Right cardiac atrium (tissue), 5 donors: ENCODE measurements at regions of chr16 and their contacts with region 1.

Region 1: DNA sequence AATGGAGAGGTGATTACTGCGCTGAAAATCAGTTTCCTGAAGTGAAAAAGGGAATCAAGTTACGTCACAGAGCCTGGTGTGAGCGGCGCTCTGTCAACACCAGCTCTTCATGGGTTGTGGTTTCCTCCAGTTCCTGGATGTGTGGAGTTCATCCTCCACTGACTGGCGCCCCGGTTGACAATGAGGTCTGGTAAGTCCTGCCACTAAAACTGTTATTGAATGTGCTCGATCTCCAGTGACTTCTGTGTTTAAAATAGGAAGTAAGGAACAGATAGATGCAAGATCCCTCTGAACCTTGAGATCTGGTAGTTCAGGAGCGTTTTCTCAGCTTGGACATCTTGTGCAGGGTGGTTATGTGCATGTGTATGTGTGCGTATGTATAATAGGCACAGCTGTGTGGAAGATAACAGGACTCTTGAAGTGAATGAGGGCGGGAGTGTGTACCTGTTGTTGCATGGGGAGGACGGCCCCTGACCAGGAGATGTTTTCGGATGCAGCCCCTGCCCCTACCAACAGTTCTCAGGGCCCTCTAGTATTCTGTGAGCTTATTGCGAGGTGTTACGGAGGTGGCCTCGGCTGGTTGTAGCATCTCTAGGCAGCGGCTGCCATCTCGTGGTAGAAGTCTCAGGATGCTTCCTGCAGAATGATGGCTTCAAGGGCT is 22.0 kb upstream of the GOT2 start:
- DNase-seq: peak; percentile 60 to 87 (median 75)
- ATAC-seq: peak; percentile 91 to 94
- H3K4me3 ChIP-seq: no peak overlapping the region
- H3K27ac ChIP-seq: no peak overlapping the region
- H3K4me1 ChIP-seq: no peaks in the 10 kb centered on the region
- H3K27me3 ChIP-seq: no peaks in the 10 kb centered on the region

Region 2: DNA sequence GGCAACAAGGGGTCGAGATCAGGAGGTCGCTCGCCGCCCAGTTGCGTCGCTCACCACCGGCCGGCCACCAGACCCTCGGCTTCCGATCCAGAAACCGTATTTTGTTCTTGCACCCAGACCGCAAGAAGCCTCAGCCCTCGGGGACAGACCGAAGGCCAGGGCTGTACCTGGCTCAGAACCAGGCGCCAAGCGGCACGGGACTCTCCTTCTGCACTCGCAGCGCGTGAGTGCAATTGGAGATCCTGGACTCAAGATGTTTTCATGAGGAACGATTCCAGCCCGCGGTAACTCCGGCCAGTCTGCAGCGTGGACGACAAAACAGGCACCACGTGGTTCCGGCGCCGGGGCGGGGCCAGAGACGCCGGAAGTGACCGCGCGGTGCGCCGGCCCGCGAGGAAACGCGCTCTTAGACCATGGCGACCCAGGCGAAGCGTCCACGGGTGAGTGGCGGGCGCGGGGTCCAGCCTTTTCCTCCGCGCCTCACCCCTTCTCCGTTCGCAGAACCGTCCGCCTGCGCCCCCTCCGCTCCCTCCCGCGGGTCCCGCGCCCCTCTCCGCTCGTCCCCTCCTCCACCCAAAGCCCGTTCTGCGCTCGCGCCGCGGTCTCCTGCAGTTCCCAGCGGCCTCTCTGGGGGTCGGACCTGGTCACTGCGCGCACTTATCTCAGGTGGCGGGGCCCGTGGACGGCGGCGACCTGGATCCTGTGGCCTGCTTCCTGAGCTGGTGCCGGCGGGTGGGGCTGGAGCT is 240.8 kb before region 1 on chr16 and contains the start of gene SETD6:
- intact Hi-C with region 1: loop called in 2 of 4 experiments (anchors 5 to 10 kb)
- DNase-seq: peak; percentile 90 to 95 (median 94)
- ATAC-seq: peak; percentile 94 to 95
- H3K4me3 ChIP-seq: peak within 1 kb of the TSS; percentile 56
- H3K27ac ChIP-seq: peak within 1 kb of the TSS; percentile 31
- H3K4me1 ChIP-seq: peaks cover 5% of the 10 kb centered on the region
- H3K27me3 ChIP-seq: no peaks in the 10 kb centered on the region
- total RNA-seq, gene SETD6: 9.7 to 12.4 (median 11.1) TPM

Region 3: DNA sequence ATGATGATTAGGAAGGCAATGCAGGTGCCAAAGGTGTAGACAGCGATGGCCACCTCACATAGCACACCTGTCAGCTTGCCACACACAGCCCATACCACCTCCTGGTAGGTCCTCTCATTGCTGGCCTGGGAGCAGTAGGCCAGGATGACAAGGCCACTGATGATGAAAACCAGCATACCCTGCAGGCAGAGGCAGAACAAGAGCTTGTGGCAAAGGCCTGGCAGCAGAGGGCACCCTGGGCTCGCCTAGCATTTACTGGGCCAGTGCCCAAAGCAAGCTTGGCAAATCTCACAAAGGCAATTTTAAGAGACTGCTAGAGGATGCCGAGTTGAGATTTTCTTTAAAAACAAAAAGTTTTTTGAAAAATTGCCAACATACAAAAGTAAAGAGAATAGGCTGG is 77.4 kb before region 1 on chr16:
- intact Hi-C with region 1: loop called in 3 of 4 experiments (anchors 2 to 10 kb)
- DNase-seq: no peak
- ATAC-seq: peak; percentile 10 to 40
- H3K4me3 ChIP-seq: no peak overlapping the region
- H3K27ac ChIP-seq: no peak overlapping the region
- H3K4me1 ChIP-seq: peaks cover 4% of the 10 kb centered on the region
- H3K27me3 ChIP-seq: no peaks in the 10 kb centered on the region

Region 4: GRCh38 chr16:58684354-58685083 is 71.6 kb before region 1 on chr16 and contains the start of gene SLC38A7:
- intact Hi-C with region 1: loop called in 2 of 4 experiments (anchors 5 to 10 kb)
- DNase-seq: peak; percentile 91 to 96 (median 95)
- ATAC-seq: peak; percentile 95 to 96
- H3K4me3 ChIP-seq: peak within 1 kb of the TSS; percentile 87
- H3K27ac ChIP-seq: peak within 1 kb of the TSS; percentile 83
- H3K4me1 ChIP-seq: peaks cover 6% of the 10 kb centered on the region
- H3K27me3 ChIP-seq: no peaks in the 10 kb centered on the region
- total RNA-seq, gene SLC38A7: 16.5 to 21.3 (median 19.0) TPM

Region 5: GRCh38 chr16:58853854-58854791 is 98.0 kb after region 1 on chr16:
- intact Hi-C with region 1: no loop called
- DNase-seq: no peak
- ATAC-seq: no peak
- H3K4me3 ChIP-seq: no peak overlapping the region
- H3K27ac ChIP-seq: no peak overlapping the region
- H3K4me1 ChIP-seq: no peaks in the 10 kb centered on the region
- H3K27me3 ChIP-seq: no peaks in the 10 kb centered on the region

Region 6: GRCh38 chr16:58882292-58882691 is 126.2 kb after region 1 on chr16:
- intact Hi-C with region 1: no loop called
- DNase-seq: no peak
- ATAC-seq: peak in 1 of 2 donors; percentile 16
- H3K4me3 ChIP-seq: no peak overlapping the region
- H3K27ac ChIP-seq: no peak overlapping the region
- H3K4me1 ChIP-seq: no peaks in the 10 kb centered on the region
- H3K27me3 ChIP-seq: no peaks in the 10 kb centered on the region

Region 7: GRCh38 chr16:58938811-58939210 is 182.7 kb after region 1 on chr16:
- intact Hi-C with region 1: no loop called
- DNase-seq: no peak
- ATAC-seq: no peak
- H3K4me3 ChIP-seq: no peak overlapping the region
- H3K27ac ChIP-seq: no peak overlapping the region
- H3K4me1 ChIP-seq: no peaks in the 10 kb centered on the region
- H3K27me3 ChIP-seq: no peaks in the 10 kb centered on the region

Region 8: GRCh38 chr16:59030923-59031485 is 274.9 kb after region 1 on chr16:
- intact Hi-C with region 1: no loop called
- DNase-seq: no peak
- ATAC-seq: no peak
- H3K4me3 ChIP-seq: no peak overlapping the region
- H3K27ac ChIP-seq: no peak overlapping the region
- H3K4me1 ChIP-seq: no peaks in the 10 kb centered on the region
- H3K27me3 ChIP-seq: no peaks in the 10 kb centered on the region